Activated CD4-positive, alpha-beta T cell treated with anti-CD3 and anti-CD28 coated beads for 36 hours (primary cell): ENCODE measurements at regions of chr12 and their contacts with region 1.

Region 1: DNA sequence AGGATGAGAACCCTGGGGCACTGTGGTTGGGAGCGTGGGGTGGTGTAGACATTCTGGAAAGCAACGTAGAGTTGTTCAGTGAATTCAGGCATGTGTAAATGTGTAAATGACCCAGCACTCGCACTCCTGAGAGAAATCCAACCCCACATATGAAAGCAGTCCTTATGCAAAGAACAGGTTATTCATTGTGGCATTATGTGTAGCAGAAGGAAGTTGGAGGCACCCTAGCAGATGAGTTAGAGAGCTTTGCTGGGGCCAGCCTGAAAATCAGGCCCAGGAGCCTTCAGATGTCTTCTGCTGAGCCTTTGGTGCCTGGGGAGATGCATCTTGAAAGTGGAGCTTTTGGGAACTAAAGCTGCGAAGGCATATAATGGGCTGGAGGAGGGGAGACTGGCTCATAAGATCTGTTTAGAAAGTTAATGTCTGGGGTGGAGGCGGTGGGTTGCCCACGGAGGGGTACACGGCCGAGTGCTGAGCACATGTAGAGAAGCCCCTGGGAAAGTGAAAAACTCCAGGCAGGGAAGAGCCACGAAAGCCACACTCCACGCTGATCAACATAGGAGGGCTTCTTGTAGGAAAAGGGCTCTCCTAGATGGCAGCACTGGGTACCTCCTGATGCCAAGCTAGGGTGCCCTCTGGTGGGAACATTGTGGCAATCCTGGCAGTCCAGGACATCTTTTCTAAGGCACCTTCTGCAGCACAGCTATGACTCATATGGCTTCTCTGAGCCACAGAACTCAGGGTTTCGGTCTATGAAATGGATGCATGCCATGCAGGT is 6.0 kb upstream of the KRT83 start:
- DNase-seq: peak; percentile 87
- ATAC-seq: peak; percentile 99
- H3K4me3 Mint-ChIP-seq: no peak overlapping the region
- H3K27ac Mint-ChIP-seq: no peak overlapping the region
- H3K4me1 Mint-ChIP-seq: peaks cover 14% of the 10 kb centered on the region
- H3K27me3 Mint-ChIP-seq: peaks cover 10% of the 10 kb centered on the region

Region 2: GRCh38 chr12:51391283-51392162 is 935.7 kb before region 1 on chr12 and contains the start of gene GALNT6:
- CTCF ChIA-PET with region 1: no interaction called
- POLR2A ChIA-PET with region 1: no interaction called
- intact Hi-C with region 1: no loop called
- DNase-seq: peak; percentile 78
- ATAC-seq: peak; percentile 43
- H3K4me3 Mint-ChIP-seq: peak within 1 kb of the TSS; percentile 85
- H3K27ac Mint-ChIP-seq: peak within 1 kb of the TSS; percentile 67
- H3K4me1 Mint-ChIP-seq: peaks cover 79% of the 10 kb centered on the region
- H3K27me3 Mint-ChIP-seq: no peaks in the 10 kb centered on the region
- total RNA-seq, gene GALNT6: 11.7 to 12.0 TPM

Region 3: GRCh38 chr12:52156736-52157565 is 170.3 kb before region 1 on chr12:
- CTCF ChIA-PET with region 1: interaction called, 14 read pairs
- POLR2A ChIA-PET with region 1: no interaction called
- intact Hi-C with region 1: loop called (anchors 1 kb)
- DNase-seq: peak; percentile 85
- ATAC-seq: peak; percentile 65
- H3K4me3 Mint-ChIP-seq: no peak overlapping the region
- H3K27ac Mint-ChIP-seq: no peak overlapping the region
- H3K4me1 Mint-ChIP-seq: peaks cover 27% of the 10 kb centered on the region
- H3K27me3 Mint-ChIP-seq: no peaks in the 10 kb centered on the region

Region 4: GRCh38 chr12:52221912-52222457 is 105.3 kb before region 1 on chr12:
- CTCF ChIA-PET with region 1: interaction called, 6 read pairs
- POLR2A ChIA-PET with region 1: no interaction called
- intact Hi-C with region 1: loop called (anchors 1 to 5 kb)
- DNase-seq: peak; percentile 96
- ATAC-seq: peak; percentile 98
- H3K4me3 Mint-ChIP-seq: no peak overlapping the region
- H3K27ac Mint-ChIP-seq: peak overlapping the region; percentile 40
- H3K4me1 Mint-ChIP-seq: peaks cover 20% of the 10 kb centered on the region
- H3K27me3 Mint-ChIP-seq: peaks cover 29% of the 10 kb centered on the region

Region 5: GRCh38 chr12:52243856-52244614 is 83.2 kb before region 1 on chr12:
- CTCF ChIA-PET with region 1: interaction called, 10 read pairs
- POLR2A ChIA-PET with region 1: no interaction called
- intact Hi-C with region 1: no loop called
- DNase-seq: peak; percentile 88
- ATAC-seq: peak; percentile 99
- H3K4me3 Mint-ChIP-seq: peak overlapping the region; percentile 50
- H3K27ac Mint-ChIP-seq: peak overlapping the region; percentile 78
- H3K4me1 Mint-ChIP-seq: peaks cover 25% of the 10 kb centered on the region
- H3K27me3 Mint-ChIP-seq: peaks cover 10% of the 10 kb centered on the region

Region 6: DNA sequence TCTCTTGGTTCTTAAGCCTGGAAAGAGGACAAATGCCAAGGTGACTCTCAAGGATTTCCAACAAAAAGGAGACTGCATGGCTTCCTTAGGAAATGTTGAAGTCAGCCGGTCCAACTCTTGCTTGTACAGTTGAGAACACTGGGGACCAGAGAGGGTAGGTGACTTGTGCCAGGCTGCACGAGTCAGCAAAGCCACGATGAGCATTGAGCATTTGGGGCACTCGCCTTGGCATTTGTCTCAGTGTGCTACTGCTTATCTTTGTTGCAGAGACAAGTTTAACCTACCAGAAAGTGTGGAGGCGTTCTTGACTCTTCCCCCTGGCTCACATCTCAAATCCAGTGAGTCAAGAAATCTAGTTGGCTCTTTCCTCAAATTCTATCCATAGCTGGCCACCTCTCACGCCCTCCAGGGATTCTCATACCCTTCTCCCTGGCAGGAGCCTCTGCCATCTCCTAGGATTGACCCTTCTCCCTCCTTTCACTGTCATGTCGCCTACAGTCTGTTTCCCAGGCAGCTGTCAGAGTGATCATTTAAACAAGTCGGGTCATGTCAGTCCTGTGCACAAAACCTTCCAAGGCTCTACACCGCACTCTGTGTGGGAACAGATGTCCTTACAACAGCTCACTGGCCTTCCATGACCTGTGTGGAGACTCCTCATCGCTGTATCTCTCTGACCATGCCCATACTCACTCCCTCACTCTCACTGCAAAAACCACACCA is 11.2 kb after region 1 on chr12:
- CTCF ChIA-PET with region 1: interaction called, 17 read pairs
- POLR2A ChIA-PET with region 1: no interaction called
- intact Hi-C with region 1: no loop called
- DNase-seq: no peak
- ATAC-seq: no peak
- H3K4me3 Mint-ChIP-seq: no peak overlapping the region
- H3K27ac Mint-ChIP-seq: no peak overlapping the region
- H3K4me1 Mint-ChIP-seq: peaks cover 8% of the 10 kb centered on the region
- H3K27me3 Mint-ChIP-seq: peaks cover 15% of the 10 kb centered on the region